CD14-positive monocyte (primary cell): ENCODE measurements at regions of chr22 and their contacts with region 1.

Region 1: DNA sequence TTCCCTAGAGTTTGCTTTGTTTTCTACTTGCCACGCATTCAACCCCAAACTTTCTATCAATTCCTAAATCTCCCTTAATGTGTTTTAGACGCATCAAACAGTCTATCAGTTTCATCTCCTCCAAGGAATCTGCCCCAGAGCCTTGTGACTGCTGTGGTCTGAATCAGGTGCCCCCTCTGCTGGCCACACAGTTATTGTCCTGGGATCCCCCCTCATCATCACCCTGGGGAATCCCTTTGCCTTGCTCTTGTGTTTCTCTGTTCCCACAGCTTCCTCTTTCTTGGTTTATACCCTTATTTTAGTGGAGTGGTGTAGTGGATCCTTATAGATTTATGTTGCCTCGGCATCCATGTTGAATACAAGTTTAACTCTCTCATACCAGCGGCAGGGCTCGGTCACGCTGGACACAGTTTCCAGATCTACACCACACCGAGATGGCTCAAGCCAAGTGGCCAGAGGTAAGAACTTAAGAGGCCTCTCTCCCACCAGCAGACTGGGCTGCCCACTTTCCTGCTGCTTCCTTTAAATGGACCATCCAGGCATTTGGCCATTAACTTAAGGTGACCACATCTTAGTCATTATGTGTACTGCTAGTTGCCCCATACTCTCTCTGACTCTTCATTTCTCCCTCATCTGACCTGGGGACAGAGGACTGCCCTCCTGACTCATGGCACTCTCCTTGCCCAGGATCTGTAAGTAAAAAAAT is 8.2 kb downstream of the UPB1 start:
- DNase-seq: peak; percentile 91 to 98 (median 95)
- H3K4me3 ChIP-seq: no peak overlapping the region
- H3K4me3 Mint-ChIP-seq: peak overlapping the region in 1 of 2 donors; percentile 26
- H3K27ac ChIP-seq: peak overlapping the region; percentile 66 to 79
- H3K27ac Mint-ChIP-seq: peak overlapping the region; percentile 92 to 99 (median 96)
- H3K4me1 ChIP-seq: peaks cover 64 to 65% of the 10 kb centered on the region in 2 donors
- H3K4me1 Mint-ChIP-seq: peaks cover 67% of the 10 kb centered on the region
- H3K27me3 ChIP-seq: no peaks in the 10 kb centered on the region
- H3K27me3 Mint-ChIP-seq: peaks cover 3 to 5% (median 5%) of the 10 kb centered on the region in 3 donors
- CTCF ChIP-seq: peak; percentile 83

Region 2: GRCh38 chr22:24466716-24467328 is 36.5 kb before region 1 on chr22:
- intact Hi-C with region 1: loop called in 1 of 2 experiments (anchors 5 kb)
- DNase-seq: no peak
- H3K4me3 ChIP-seq: peak overlapping the region in 1 of 3 experiments; percentile 48
- H3K4me3 Mint-ChIP-seq: peak overlapping the region; percentile 37 to 72
- H3K27ac ChIP-seq: peak overlapping the region; percentile 37 to 58
- H3K27ac Mint-ChIP-seq: peak overlapping the region; percentile 64 to 91 (median 79)
- H3K4me1 ChIP-seq: peaks cover 48 to 64% of the 10 kb centered on the region in 2 donors
- H3K4me1 Mint-ChIP-seq: peaks cover 57% of the 10 kb centered on the region
- H3K27me3 ChIP-seq: no peaks in the 10 kb centered on the region
- H3K27me3 Mint-ChIP-seq: no peaks in the 10 kb centered on the region
- CTCF ChIP-seq: no peak

Region 3: DNA sequence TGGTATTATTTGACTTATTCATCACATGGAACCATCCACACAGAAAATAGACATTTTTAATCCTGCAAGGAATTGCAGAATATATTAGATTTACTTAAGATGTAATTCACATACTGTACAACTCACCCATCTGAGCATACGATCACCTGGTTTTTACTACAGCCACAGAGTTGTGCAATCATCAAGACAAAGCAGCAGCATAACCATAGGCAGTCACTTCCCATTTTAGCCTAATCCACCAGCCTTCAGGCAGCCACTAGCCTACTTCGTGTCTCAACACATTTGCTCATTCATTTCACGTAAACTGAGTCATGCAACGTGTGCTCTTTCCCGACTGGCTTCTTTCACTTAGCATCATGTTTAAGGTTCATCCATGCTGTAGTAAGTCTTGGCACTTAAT is 248.2 kb after region 1 on chr22:
- intact Hi-C with region 1: no loop called
- DNase-seq: peak; percentile 3 to 69 (median 50)
- H3K4me3 ChIP-seq: no peak overlapping the region
- H3K4me3 Mint-ChIP-seq: no peak overlapping the region
- H3K27ac ChIP-seq: no peak overlapping the region
- H3K27ac Mint-ChIP-seq: no peak overlapping the region
- H3K4me1 ChIP-seq: no peaks in the 10 kb centered on the region
- H3K4me1 Mint-ChIP-seq: peaks cover 7% of the 10 kb centered on the region
- H3K27me3 ChIP-seq: no peaks in the 10 kb centered on the region
- H3K27me3 Mint-ChIP-seq: peaks cover 2 to 12% (median 5%) of the 10 kb centered on the region in 3 donors
- CTCF ChIP-seq: no peak